ENCODE measurements at regions of chr19 and their contacts with region 1.

Region 1: GRCh38 chr19:13880059-13881043 is 3.4 kb downstream of the NANOS3 start:
- DNase-seq: peak; percentile 95
- H3K4me3 ChIP-seq: peak overlapping the region; percentile 28
- H3K27ac ChIP-seq: no peak overlapping the region
- H3K4me1 ChIP-seq: peaks cover 36% of the 10 kb centered on the region
- CTCF ChIP-seq: peak; percentile 99

Region 2: DNA sequence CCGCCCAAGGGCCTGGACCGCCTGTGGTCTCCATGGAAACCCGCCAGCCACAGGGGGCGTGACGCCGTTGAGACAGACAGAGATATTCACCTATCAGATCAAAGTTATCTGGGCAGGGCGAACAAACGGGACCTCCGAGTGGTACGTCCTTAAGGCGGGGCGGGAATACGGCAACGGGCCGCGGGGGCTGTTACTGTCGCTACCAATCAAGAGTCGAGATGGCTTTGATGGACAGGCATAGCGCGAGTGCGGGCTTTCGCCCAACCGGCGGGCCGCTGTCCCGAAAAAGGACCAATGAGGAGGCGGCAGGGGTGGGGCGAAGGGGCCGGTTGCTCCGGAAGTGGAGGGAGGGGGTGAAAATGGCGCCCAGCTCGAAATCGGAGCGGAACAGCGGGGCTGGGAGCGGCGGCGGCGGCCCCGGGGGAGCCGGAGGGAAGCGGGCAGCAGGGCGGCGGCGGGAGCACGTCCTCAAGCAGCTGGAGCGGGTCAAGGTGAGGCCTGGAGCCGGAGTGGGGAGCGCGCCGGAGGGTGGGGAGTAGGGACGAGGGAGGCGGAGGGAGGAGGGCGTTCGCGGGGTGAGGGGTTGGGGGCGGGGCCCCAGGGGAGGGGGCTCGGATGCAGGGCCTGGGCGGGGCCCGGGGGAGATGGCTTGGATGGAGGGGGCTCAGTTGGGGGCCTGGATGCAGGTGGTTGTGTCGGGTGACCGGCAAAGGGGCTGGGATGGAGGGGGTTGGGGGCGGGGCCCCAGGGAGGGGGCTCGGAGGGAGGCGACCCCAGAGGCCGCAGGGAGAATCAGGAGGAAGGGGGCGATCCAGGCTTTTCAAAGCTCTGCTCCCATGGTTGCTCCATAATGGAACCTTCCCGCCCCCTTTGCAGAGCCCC is 72.0 kb after region 1 on chr19 and contains the start of gene DCAF15:
- CTCF ChIA-PET with region 1: no interaction called
- POLR2A ChIA-PET with region 1: no interaction called
- intact Hi-C with region 1: loop called (anchors 5 kb)
- DNase-seq: peak; percentile 100
- H3K4me3 ChIP-seq: peak within 1 kb of the TSS; percentile 85
- H3K27ac ChIP-seq: peak within 1 kb of the TSS; percentile 41
- H3K4me1 ChIP-seq: peaks cover 16% of the 10 kb centered on the region
- CTCF ChIP-seq: no peak
- total RNA-seq, gene DCAF15: 61.0 and 71.3 TPM in 2 replicates

Region 3: DNA sequence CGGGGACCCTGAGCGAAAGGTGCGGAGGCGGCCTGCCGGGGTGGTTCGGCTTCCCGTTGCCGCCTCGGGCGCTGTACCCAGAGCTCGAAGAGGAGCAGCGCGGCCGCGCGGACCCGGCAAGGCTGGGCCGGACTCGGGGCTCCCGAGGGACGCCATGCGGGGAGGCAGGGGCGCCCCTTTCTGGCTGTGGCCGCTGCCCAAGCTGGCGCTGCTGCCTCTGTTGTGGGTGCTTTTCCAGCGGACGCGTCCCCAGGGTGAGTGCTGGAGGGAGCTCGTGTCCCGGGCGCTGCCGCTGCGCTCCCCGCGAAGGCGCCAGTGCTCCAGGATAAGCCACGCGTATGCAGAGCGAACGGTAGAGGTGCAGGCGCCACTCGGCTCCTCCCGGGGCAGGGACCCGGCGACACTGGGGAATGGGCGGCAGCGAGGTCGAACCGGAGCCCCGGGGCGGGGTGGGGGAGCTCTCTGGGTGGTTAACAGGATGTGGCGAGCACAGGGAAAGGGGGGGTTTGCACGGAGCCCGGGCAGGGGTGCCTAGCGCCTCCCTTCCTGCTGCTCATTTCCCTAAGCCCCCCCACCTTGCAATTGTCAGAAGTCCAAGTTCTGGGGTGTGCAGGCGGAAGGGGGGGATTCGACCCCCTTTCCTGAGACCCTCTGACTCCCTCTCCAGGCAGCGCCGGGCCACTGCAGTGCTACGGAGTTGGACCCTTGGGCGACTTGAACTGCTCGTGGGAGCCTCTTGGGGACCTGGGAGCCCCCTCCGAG is 151.5 kb after region 1 on chr19 and contains the start of gene IL27RA:
- CTCF ChIA-PET with region 1: no interaction called
- POLR2A ChIA-PET with region 1: interaction called, 3 read pairs
- intact Hi-C with region 1: loop called (anchors 1 kb)
- DNase-seq: peak; percentile 85
- H3K4me3 ChIP-seq: peak within 1 kb of the TSS; percentile 71
- H3K27ac ChIP-seq: peak within 1 kb of the TSS; percentile 45
- H3K4me1 ChIP-seq: peaks cover 14% of the 10 kb centered on the region
- CTCF ChIP-seq: peak; percentile 88
- total RNA-seq, gene IL27RA: 5.2 and 6.7 TPM in 2 replicates

Region 4: GRCh38 chr19:14048443-14049153 is 168.2 kb after region 1 on chr19:
- CTCF ChIA-PET with region 1: no interaction called
- POLR2A ChIA-PET with region 1: interaction called, 4 read pairs
- intact Hi-C with region 1: loop called (anchors 1 kb)
- DNase-seq: peak; percentile 67
- H3K4me3 ChIP-seq: no peak overlapping the region
- H3K27ac ChIP-seq: no peak overlapping the region
- H3K4me1 ChIP-seq: no peaks in the 10 kb centered on the region
- CTCF ChIP-seq: peak; percentile 97

Region 5: DNA sequence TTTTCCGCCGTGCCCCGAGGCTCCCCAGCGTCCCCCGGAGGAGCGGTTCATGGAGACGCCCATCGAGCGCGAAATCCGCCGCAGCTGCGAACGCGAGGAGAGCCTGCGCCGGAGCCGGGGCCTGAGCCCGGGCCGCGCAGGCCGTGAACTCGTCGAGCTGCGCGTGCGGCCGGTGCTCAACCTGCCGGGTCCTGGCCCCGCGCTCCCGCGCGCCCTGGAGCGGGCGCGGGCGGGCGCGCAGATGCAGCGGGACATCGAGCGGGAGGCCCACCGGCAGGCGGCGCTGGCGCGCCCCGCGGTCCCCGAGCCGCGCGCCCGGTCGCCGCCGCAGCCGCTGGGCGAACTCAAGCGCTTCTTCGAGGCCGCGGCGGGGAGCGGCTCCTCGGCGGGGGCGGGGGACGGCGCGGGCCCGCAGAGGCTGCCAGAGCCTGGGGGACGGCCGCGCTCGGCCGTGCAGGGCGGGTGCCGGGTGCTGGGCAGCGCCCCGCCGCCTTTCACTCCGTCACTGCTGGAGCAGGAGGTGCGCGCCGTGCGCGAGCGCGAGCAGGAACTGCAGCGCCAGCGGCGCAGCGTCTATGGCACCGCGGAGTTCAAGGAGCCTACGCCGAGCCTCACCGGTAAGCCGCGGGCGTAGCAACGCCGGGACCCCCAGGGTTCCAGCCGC is 193.0 kb after region 1 on chr19:
- CTCF ChIA-PET with region 1: no interaction called
- POLR2A ChIA-PET with region 1: interaction called, 4 read pairs
- intact Hi-C with region 1: loop called (anchors 1 kb)
- DNase-seq: peak; percentile 88
- H3K4me3 ChIP-seq: peak overlapping the region; percentile 76
- H3K27ac ChIP-seq: peak overlapping the region; percentile 62
- H3K4me1 ChIP-seq: peaks cover 29% of the 10 kb centered on the region
- CTCF ChIP-seq: no peak; the same call in 1 of the 2 replicates

Measured in OCI-LY7 (cell line).